K562 (cell line): ENCODE measurements at regions of chr3 and their contacts with region 1.

Region 1: DNA sequence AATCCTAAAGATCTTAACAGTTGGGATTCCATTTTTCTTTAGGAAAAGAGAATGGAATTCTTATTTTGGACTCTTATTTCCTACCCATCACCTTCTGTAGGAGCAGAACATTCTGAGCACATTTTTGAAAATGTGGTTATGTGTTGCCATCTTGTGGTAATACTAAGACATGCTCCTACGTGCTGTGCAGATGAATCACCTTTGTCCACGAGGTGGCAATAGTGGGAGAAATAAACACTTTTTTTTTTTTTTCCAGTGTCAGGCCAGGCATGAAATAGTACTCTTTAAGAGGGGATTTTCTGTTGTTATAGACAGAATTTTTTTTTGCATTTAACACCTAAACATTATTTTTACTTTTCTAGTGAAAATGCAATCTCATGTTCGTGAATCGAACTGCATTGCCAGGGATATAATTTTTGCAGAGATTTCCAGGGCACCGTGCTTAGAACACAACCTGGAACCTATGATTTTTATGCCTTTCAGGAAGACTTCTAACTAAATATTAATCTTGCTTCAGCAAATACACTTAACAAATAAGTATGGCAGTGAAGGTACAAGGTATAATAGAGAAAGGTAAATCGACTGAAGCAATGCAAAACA is 196.6 kb downstream of the GAP43 start:
- DNase-seq: peak; percentile 38 to 71 (median 45)
- ATAC-seq: peak; percentile 94
- H3K4me3 ChIP-seq: no peak overlapping the region
- H3K27ac ChIP-seq: no peak overlapping the region
- H3K4me1 ChIP-seq: no peaks in the 10 kb centered on the region
- H3K27me3 ChIP-seq: no peaks in the 10 kb centered on the region
- CTCF ChIP-seq: peak; percentile 89 to 100 (median 99)
- EP300 ChIP-seq: no peak
- POLR2A ChIP-seq: no peak
- RAD21 ChIP-seq: peak; percentile 78 to 82

Region 2: DNA sequence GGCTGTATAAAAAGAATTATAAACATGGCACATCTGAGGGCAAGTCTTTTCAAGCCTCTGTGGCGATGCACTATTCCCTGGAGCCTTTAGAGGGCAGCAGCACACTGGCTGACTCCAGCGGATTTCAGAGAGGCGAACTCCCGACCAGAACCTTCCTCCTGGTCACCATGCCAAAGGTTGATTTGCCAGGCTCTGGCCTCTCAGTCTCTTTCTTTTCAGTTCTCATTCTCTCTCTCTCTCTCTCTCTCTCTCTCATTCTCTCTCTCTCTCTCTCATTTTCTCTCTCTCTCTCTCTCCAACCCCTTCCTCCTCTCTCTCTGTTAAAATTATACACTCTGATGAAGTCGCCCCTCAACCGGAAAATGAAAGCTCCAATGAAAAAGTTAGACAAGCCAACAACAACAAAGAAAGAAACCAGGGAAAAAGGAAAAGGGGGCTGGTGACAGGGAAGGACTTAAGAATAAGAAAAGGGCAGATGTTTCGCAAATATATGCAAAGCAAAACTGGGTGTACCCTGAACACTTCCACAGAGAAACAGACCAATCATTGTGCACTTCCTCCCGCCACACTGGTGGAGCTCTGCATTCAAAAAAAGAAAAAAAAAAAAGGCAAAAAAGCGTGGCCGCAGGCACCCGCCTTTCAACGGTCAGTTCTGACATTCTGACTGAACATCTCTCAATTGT is 1435.9 kb before region 1 on chr3:
- CTCF ChIA-PET with region 1: interaction called, 4 read pairs
- POLR2A ChIA-PET with region 1: no interaction called
- in situ Hi-C with region 1: no loop called
- intact Hi-C with region 1: loop called (anchors 10 kb)
- DNase-seq: peak; percentile 40 to 57 (median 44)
- ATAC-seq: peak; percentile 88
- H3K4me3 ChIP-seq: no peak overlapping the region
- H3K27ac ChIP-seq: no peak overlapping the region
- H3K4me1 ChIP-seq: no peaks in the 10 kb centered on the region
- H3K27me3 ChIP-seq: no peaks in the 10 kb centered on the region
- CTCF ChIP-seq: peak; percentile 58 to 76 (median 74)
- EP300 ChIP-seq: no peak
- POLR2A ChIP-seq: no peak
- RAD21 ChIP-seq: peak; percentile 36 to 66

Region 3: DNA sequence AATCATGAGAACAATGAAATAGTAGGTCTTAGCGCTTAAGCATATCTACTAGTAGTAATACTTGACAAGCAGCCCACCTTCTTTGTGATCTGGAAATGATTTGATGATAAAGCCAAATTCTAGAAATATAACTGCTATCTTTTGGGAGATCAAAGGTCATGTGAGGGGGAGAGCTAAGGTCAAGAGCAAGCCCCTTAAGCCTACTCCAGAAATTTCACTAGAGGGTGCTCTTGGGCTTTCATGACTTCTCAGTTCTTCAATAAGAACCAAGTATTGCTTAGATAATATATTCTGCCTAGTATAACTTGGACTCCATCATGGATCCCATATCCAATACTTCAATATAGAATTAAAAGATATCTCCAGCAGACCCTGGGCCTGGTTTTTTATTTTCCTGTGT is 992.4 kb before region 1 on chr3:
- CTCF ChIA-PET with region 1: interaction called, 3 read pairs
- POLR2A ChIA-PET with region 1: no interaction called
- in situ Hi-C with region 1: no loop called
- intact Hi-C with region 1: loop called (anchors 5 kb)
- DNase-seq: peak; percentile 11 to 31 (median 28)
- ATAC-seq: peak; percentile 70; the same call in 1 of the 3 replicates
- H3K4me3 ChIP-seq: no peak overlapping the region
- H3K27ac ChIP-seq: no peak overlapping the region
- H3K4me1 ChIP-seq: no peaks in the 10 kb centered on the region
- H3K27me3 ChIP-seq: no peaks in the 10 kb centered on the region
- CTCF ChIP-seq: peak; percentile 20 to 53 (median 39); a peak in 3 of 6 replicates
- EP300 ChIP-seq: no peak
- POLR2A ChIP-seq: no peak
- RAD21 ChIP-seq: peak; percentile 77 to 79

Region 4: DNA sequence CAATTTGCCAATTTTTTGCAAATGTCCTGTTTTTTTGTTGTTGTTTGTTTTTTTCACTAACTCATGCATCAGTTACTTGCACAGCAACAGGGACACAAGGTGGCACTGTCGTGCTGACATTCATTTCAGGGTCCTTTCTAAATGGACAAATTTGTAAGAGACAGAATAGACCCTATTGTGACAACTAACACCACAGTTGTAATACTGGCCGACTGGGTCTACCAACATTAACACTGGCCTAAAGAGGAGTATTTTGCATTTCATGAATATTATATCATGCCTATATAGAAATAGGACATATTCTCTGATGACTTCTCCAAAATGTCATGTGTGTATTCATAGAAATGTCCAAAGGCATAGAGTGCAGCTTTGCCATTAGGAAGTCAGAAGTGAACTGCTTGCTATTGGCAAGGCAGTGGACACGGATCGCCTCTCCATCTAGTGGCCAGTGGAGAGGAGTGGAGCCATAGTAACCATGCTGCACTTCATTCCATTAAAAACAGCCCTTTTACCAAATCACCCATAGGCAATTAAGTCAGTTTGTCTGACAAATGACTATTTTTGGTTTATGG is 727.6 kb before region 1 on chr3:
- CTCF ChIA-PET with region 1: no interaction called
- POLR2A ChIA-PET with region 1: no interaction called
- in situ Hi-C with region 1: no loop called
- intact Hi-C with region 1: loop called (anchors 10 kb)
- DNase-seq: peak in 3 of 4 experiments; percentile 2 to 47 (median 17)
- ATAC-seq: peak; percentile 91
- H3K4me3 ChIP-seq: no peak overlapping the region
- H3K27ac ChIP-seq: no peak overlapping the region
- H3K4me1 ChIP-seq: no peaks in the 10 kb centered on the region
- H3K27me3 ChIP-seq: no peaks in the 10 kb centered on the region
- CTCF ChIP-seq: peak; percentile 32 to 67 (median 49); a peak in 4 of 6 replicates
- EP300 ChIP-seq: no peak
- POLR2A ChIP-seq: no peak
- RAD21 ChIP-seq: peak; percentile 53 to 63

Region 5: GRCh38 chr3:115804722-115805121 is 15.2 kb before region 1 on chr3:
- CTCF ChIA-PET with region 1: no interaction called
- POLR2A ChIA-PET with region 1: no interaction called
- in situ Hi-C with region 1: no loop called
- intact Hi-C with region 1: no loop called
- DNase-seq: no peak
- ATAC-seq: no peak
- H3K4me3 ChIP-seq: no peak overlapping the region
- H3K27ac ChIP-seq: no peak overlapping the region
- H3K4me1 ChIP-seq: no peaks in the 10 kb centered on the region
- H3K27me3 ChIP-seq: no peaks in the 10 kb centered on the region; a peak in 1 of 5 replicates
- CTCF ChIP-seq: no peak
- EP300 ChIP-seq: no peak
- POLR2A ChIP-seq: no peak
- RAD21 ChIP-seq: no peak

Region 6: DNA sequence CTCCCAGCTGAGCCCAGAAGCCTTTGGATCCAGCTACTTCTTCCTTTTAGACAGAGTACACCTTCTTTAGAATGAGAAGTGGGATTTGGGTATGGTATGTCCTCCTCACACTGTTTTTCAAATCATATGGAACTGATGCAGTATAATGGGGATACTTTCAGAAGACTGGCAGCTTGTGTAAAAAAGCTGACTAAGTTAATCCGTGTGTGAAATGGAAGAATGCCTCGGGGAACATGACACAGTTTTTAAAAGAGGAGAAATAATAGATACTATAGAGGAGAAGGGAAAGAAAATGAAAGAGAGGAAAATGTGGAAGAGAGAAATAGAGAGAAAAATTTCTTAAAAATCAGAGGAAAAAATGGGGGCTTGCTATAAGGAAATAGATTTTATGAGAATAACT is 937.4 kb after region 1 on chr3:
- CTCF ChIA-PET with region 1: interaction called, 12 read pairs
- POLR2A ChIA-PET with region 1: no interaction called
- in situ Hi-C with region 1: no loop called
- intact Hi-C with region 1: loop called (anchors 5 kb)
- DNase-seq: no peak
- ATAC-seq: no peak
- H3K4me3 ChIP-seq: no peak overlapping the region
- H3K27ac ChIP-seq: no peak overlapping the region
- H3K4me1 ChIP-seq: no peaks in the 10 kb centered on the region
- H3K27me3 ChIP-seq: no peaks in the 10 kb centered on the region
- CTCF ChIP-seq: no peak
- EP300 ChIP-seq: no peak
- POLR2A ChIP-seq: no peak
- RAD21 ChIP-seq: no peak